Activated CD8-positive, alpha-beta T cell treated with anti-CD3 and anti-CD28 coated beads, Interleukin-2, amount 10 ng/mL, durations not matched to agents 7 days and 5 days (primary cell): ENCODE measurements at regions of chr12 and their contacts with region 1.

Region 1: DNA sequence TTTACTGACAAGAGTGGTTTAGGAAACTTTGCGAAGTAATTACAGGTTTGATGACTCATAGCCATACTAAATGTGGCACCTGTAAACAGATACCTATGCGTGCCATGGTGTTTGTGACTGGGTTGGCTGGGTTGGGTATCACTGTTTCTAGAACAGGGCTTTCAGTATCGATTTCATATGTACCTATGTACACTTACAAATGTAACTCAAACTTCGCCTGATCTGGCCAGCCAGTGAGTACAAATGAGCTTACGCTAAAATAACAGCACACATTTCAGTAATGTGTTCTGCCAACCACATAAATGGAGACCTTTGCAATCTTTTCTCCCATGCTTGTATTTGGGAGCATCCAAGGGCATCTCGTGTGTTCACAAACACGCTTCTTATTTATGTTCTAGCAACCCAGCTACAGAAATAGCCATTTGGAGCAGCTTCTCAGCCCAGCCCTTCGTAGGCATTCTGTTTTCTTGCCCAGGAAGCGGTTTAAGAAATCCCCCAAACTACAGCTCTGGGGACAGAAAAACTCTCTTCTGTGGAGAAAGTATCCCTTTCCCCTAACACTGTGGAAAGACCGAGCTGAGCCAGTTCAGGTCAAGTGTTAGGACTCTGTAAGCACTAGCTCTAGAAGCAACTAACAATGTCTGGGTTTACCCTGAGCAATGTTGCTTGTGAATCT is 42.3 kb upstream of the MDM1 start:
- DNase-seq: peak; percentile 60
- ATAC-seq: peak; percentile 85
- H3K4me3 Mint-ChIP-seq: no peak overlapping the region
- H3K27ac Mint-ChIP-seq: peak overlapping the region; percentile 73
- H3K4me1 Mint-ChIP-seq: peaks cover 41% of the 10 kb centered on the region
- H3K27me3 Mint-ChIP-seq: no peaks in the 10 kb centered on the region

Region 2: DNA sequence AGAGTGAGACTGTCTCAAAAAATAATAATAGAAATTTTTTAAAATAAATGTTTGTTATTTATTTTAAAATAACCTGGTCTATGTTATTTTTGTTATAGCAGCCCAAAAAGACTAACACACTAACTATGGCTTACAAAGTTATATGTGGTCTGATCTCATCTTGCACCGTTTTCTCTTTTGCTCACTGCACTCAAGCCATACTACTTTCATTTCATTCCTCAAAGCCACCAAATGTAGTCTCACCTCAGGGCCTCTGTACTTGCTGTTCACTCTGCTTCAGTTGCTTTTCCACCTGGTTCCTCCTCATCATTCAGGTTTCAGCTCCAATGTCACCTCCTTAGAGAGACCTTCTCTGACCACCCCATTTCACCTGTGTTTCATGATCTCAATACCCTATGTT is 12.9 kb after region 1 on chr12:
- CTCF ChIA-PET with region 1: interaction called, 5 read pairs
- POLR2A ChIA-PET with region 1: interaction called, 12 read pairs
- DNase-seq: no peak
- ATAC-seq: no peak
- H3K4me3 Mint-ChIP-seq: no peak overlapping the region
- H3K27ac Mint-ChIP-seq: no peak overlapping the region
- H3K4me1 Mint-ChIP-seq: peaks cover 20% of the 10 kb centered on the region
- H3K27me3 Mint-ChIP-seq: no peaks in the 10 kb centered on the region